ENCODE measurements at regions of chr1 and their contacts with region 1.

Region 1: GRCh38 chr1:36722871-36723270 is 240.2 kb upstream of the CSF3R start:
- DNase-seq: no peak
- ATAC-seq: no peak

Region 2: GRCh38 chr1:36675106-36675505 is 47.8 kb before region 1 on chr1:
- intact Hi-C with region 1: loop called (anchors 1 kb)
- DNase-seq: no peak
- ATAC-seq: no peak

Region 3: DNA sequence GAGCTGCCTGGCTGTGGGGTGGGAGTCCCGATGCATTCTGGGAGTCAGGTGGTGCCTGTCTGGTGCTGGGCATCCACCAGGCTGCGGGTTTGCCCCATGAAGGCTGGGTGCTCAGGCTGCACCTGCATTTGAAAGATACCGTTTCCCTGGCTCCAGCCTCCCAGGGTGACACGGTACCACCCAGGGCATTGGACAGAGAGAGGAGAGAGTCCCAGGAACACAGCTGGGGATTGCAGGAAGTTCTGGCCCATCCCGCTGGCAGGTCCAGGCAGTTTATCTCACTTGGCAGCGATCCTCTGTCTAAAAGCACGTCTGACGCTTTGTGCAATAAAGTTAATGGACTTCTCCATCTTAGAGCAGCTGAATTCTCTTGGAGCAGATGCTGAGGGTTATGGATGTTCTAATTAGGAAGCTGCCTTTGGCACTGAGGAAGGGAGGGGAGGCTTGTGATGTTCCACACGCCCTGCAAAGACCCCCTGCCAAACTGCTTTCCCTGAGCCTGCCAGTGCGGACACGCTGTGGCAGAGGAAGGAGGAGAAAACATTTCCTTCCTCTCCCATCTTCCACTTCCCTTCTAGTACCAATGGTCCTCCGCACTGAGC is 64.5 kb after region 1 on chr1:
- intact Hi-C with region 1: no loop called
- DNase-seq: no peak
- ATAC-seq: no peak